ENCODE measurements at regions of chrX and their contacts with region 1.

Region 1: DNA sequence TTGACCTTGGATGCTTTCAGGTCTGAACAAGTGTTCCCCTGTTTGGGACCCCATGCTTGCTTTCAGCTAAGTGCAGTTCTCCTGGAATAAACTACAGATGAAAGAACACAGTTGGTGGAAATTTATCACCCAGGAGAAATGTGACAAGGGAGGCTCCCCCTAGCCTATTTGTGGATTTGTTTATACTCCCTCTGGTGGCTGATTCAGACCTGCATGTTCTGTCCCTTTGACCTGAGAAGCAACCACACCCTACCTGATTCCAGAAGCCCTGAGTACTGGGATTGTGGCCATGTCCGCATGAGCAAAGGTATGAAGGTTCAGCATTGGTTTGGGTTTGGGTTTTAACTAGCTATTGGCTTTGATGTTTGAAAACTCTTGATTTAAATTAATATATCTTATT is 440.9 kb downstream of the MID1IP1 start:
- DNase-seq: no peak
- H3K4me3 ChIP-seq: no peak overlapping the region
- H3K27ac ChIP-seq: no peak overlapping the region
- H3K4me1 ChIP-seq: no peaks in the 10 kb centered on the region
- H3K27me3 ChIP-seq: no peaks in the 10 kb centered on the region
- CTCF ChIP-seq: peak; percentile 10 to 60 (median 56)
- EP300 ChIP-seq: no peak
- POLR2A ChIP-seq: no peak
- RAD21 ChIP-seq: peak; percentile 48 to 69

Region 2: GRCh38 chrX:39174772-39175417 is 67.3 kb before region 1 on chrX:
- CTCF ChIA-PET with region 1: no interaction called
- POLR2A ChIA-PET with region 1: no interaction called
- DNase-seq: no peak
- H3K4me3 ChIP-seq: no peak overlapping the region
- H3K27ac ChIP-seq: no peak overlapping the region
- H3K4me1 ChIP-seq: peaks cover 0 to 11% (median 2%) of the 10 kb centered on the region in 4 experiments; a peak in 4 of 7 replicates
- H3K27me3 ChIP-seq: no peaks in the 10 kb centered on the region
- CTCF ChIP-seq: no peak
- EP300 ChIP-seq: no peak
- POLR2A ChIP-seq: no peak
- RAD21 ChIP-seq: no peak

Region 3: GRCh38 chrX:39227371-39227770 is 14.8 kb before region 1 on chrX:
- CTCF ChIA-PET with region 1: interaction called, 12 read pairs
- POLR2A ChIA-PET with region 1: no interaction called
- DNase-seq: no peak
- H3K4me3 ChIP-seq: no peak overlapping the region
- H3K27ac ChIP-seq: no peak overlapping the region
- H3K4me1 ChIP-seq: no peaks in the 10 kb centered on the region; a peak in 1 of 7 replicates
- H3K27me3 ChIP-seq: no peaks in the 10 kb centered on the region
- CTCF ChIP-seq: no peak
- EP300 ChIP-seq: no peak
- POLR2A ChIP-seq: no peak
- RAD21 ChIP-seq: no peak

Region 4: GRCh38 chrX:39645178-39645895 is 403.1 kb after region 1 on chrX:
- CTCF ChIA-PET with region 1: no interaction called
- POLR2A ChIA-PET with region 1: no interaction called
- DNase-seq: no peak
- H3K4me3 ChIP-seq: no peak overlapping the region
- H3K27ac ChIP-seq: no peak overlapping the region
- H3K4me1 ChIP-seq: peaks cover 0 to 3% (median 0%) of the 10 kb centered on the region in 4 experiments; a peak in 1 of 7 replicates
- H3K27me3 ChIP-seq: no peaks in the 10 kb centered on the region
- CTCF ChIP-seq: no peak
- EP300 ChIP-seq: no peak
- POLR2A ChIP-seq: no peak
- RAD21 ChIP-seq: no peak

Region 5: GRCh38 chrX:39808471-39808917 is 566.3 kb after region 1 on chrX:
- CTCF ChIA-PET with region 1: no interaction called
- POLR2A ChIA-PET with region 1: no interaction called
- DNase-seq: no peak
- H3K4me3 ChIP-seq: no peak overlapping the region
- H3K27ac ChIP-seq: no peak overlapping the region
- H3K4me1 ChIP-seq: peaks cover 0 to 6% (median 2%) of the 10 kb centered on the region in 4 experiments; a peak in 4 of 7 replicates
- H3K27me3 ChIP-seq: no peaks in the 10 kb centered on the region
- CTCF ChIP-seq: no peak
- EP300 ChIP-seq: no peak
- POLR2A ChIP-seq: no peak
- RAD21 ChIP-seq: no peak